ENCODE measurements at regions of chr11 and their contacts with region 1.

Region 1: GRCh38 chr11:107689317-107690202 is 22.3 kb downstream of the SLN start:
- DNase-seq: no peak
- H3K4me3 ChIP-seq: no peak overlapping the region
- H3K27ac ChIP-seq: no peak overlapping the region
- H3K4me1 ChIP-seq: peaks cover 0 to 12% (median 8%) of the 10 kb centered on the region in 4 donors
- H3K27me3 ChIP-seq: no peaks in the 10 kb centered on the region
- CTCF ChIP-seq: peak; percentile 59 to 65 (median 59)
- EP300 ChIP-seq: no peak
- POLR2A ChIP-seq: no peak

Region 2: DNA sequence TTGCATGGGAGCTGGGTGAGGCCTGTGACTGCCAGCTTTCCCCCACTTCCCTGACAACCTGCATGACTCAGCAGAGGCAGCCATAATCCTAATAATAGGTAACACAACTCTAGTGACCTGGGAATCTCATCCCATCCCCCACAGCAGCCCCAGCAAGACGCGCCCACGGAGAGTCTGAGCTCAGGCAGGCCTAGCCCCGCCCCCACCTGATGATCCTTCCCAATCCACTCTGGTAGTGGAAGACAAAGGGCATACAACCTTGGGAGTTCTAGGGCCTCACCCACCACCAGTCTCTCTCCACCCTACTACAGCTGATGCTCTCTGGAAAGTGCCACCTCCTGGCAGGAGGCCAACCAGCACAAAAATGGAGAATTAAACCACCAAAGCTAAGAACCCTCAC is 292.2 kb before region 1 on chr11:
- intact Hi-C with region 1: no loop called
- DNase-seq: no peak
- H3K4me3 ChIP-seq: no peak overlapping the region
- H3K27ac ChIP-seq: no peak overlapping the region
- H3K4me1 ChIP-seq: no peaks in the 10 kb centered on the region
- H3K27me3 ChIP-seq: no peaks in the 10 kb centered on the region
- CTCF ChIP-seq: no peak
- EP300 ChIP-seq: no peak
- POLR2A ChIP-seq: no peak

Region 3: DNA sequence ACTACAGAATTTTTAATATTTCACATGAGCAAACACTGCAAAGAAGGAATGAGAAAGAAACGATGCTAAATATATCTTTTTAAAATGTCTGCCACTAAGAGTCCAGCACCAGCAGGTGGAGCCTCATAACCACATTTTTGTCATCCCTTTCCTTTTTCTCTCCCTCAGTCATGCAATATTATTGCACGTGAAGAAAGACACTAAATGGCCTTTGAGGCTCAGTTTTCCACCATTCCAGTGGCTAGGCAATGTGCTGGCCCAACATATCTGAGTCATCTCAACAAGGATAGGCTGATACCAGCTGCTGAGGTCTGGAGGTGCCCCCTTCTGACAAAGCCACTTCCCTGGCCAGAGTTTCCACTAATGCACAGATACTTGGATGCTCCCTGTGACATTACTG is 125.9 kb before region 1 on chr11:
- intact Hi-C with region 1: loop called (anchors 5 kb)
- DNase-seq: no peak
- H3K4me3 ChIP-seq: no peak overlapping the region
- H3K27ac ChIP-seq: peak overlapping the region in 3 of 4 donors; percentile 4 to 21 (median 17)
- H3K4me1 ChIP-seq: peaks cover 20 to 34% (median 25%) of the 10 kb centered on the region in 4 donors
- H3K27me3 ChIP-seq: no peaks in the 10 kb centered on the region
- CTCF ChIP-seq: peak; percentile 58 to 61 (median 61)
- EP300 ChIP-seq: no peak
- POLR2A ChIP-seq: no peak

Region 4: GRCh38 chr11:107577346-107577711 is 112.2 kb before region 1 on chr11:
- intact Hi-C with region 1: loop called (anchors 2 kb)
- DNase-seq: no peak
- H3K4me3 ChIP-seq: no peak overlapping the region
- H3K27ac ChIP-seq: no peak overlapping the region
- H3K4me1 ChIP-seq: no peaks in the 10 kb centered on the region
- H3K27me3 ChIP-seq: no peaks in the 10 kb centered on the region
- CTCF ChIP-seq: no peak
- EP300 ChIP-seq: no peak
- POLR2A ChIP-seq: no peak

Region 5: GRCh38 chr11:107882095-107882820 is 192.7 kb after region 1 on chr11:
- intact Hi-C with region 1: no loop called
- DNase-seq: no peak
- H3K4me3 ChIP-seq: no peak overlapping the region
- H3K27ac ChIP-seq: no peak overlapping the region
- H3K4me1 ChIP-seq: no peaks in the 10 kb centered on the region
- H3K27me3 ChIP-seq: no peaks in the 10 kb centered on the region
- CTCF ChIP-seq: no peak
- EP300 ChIP-seq: no peak
- POLR2A ChIP-seq: no peak

Measured in esophagus muscularis mucosa (tissue), 4 donors.